CD4-positive, alpha-beta memory T cell (primary cell): ENCODE measurements at regions of chr18 and their contacts with region 1.

Region 1: DNA sequence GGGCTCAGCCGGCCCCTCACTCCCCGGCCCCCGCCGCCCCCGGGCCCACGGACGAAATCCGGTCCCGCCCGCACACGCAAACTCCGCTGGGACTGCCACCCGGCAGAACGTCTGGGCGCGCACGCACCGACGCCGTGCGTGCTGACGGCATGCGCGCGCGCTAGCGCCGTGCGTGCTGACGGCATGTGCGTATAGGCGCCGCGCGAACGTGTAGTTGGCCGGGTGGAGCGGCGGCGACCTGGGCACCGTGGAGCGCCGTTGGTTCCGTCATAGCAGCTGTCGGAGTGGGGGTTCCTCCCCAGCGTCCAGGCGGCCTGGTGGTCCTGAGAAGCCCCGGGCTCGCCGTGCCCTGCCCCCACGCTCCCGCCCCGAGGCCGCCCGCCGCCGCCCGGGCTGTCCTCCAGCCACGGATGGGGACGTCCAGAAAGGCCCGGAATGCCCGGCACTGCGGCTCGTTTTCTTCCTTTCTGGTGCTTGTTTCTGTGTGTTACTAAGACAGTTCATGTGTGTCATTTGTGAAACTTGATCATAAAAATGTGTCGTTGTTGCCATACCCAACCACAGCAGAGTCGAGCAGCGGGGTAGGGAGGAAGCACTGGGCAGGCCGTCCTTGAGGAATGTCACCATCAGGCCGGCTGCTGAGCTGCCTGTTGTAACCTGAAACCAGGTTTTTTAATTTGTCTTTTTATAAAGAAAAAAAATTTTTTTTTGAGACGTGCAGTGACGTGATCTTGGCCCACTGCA is at the start of gene TXNL4A:
- DNase-seq: peak; percentile 81 to 87 (median 84)
- H3K4me3 ChIP-seq: peak within 1 kb of the TSS; percentile 78 to 89
- H3K4me3 Mint-ChIP-seq: peak within 1 kb of the TSS; percentile 92 to 96 (median 94)
- H3K27ac ChIP-seq: peak within 1 kb of the TSS; percentile 95
- H3K27ac Mint-ChIP-seq: peak within 1 kb of the TSS; percentile 80 to 100 (median 98)
- H3K4me1 ChIP-seq: peaks cover 38% of the 10 kb centered on the region
- H3K4me1 Mint-ChIP-seq: peaks cover 28 to 49% (median 38%) of the 10 kb centered on the region in 4 donors
- H3K27me3 ChIP-seq: no peaks in the 10 kb centered on the region
- H3K27me3 Mint-ChIP-seq: no peaks in the 10 kb centered on the region
- total RNA-seq, gene TXNL4A: 72.6 to 76.1 TPM

Region 2: DNA sequence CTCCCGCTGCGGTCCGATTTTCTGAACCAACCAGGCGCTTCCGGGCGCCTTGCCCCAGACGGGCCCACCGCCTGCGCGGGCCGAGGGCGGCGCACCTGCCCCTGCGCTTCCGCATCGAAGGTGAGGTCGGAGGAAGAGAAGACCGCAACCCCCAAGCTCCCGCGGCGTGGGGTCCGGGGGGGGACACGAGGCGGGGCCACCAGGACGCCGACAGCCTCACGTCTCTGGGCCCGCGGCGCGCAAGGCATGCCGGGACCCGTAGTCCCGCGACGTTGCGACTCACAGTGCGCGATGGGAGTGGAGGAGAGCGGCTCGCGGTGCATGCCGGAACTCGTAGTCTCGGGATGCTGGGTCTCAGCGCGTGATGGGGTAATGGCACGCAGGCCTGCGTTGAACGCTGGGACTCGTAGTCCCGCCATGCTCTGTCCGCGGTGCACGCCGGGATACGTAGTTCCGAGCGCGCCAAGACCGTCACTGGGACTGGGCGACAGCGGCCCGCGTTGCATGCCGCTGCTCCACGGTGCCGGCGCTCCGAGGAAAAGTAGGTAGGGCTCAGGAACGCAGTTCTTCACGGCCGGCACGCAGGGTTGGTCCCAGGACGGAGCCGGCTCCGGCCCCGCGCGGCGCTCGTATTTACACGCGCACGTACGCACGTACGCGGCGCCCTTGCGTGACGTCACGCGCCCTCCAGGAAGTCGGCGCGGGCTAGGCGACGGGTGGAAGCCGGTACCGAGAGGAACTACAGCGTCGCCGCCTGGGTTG is 309.3 kb before region 1 on chr18 and contains the start of gene CTDP1:
- CTCF ChIA-PET with region 1: no interaction called
- POLR2A ChIA-PET with region 1: interaction called, 3 read pairs
- intact Hi-C with region 1: loop called (anchors 1 kb)
- DNase-seq: peak; percentile 98 to 99 (median 99)
- H3K4me3 ChIP-seq: peak within 1 kb of the TSS; percentile 75 to 88
- H3K4me3 Mint-ChIP-seq: peak within 1 kb of the TSS; percentile 95 to 100 (median 98)
- H3K27ac ChIP-seq: peak within 1 kb of the TSS; percentile 98
- H3K27ac Mint-ChIP-seq: peak within 1 kb of the TSS; percentile 99 to 100 (median 99)
- H3K4me1 ChIP-seq: peaks cover 53% of the 10 kb centered on the region
- H3K4me1 Mint-ChIP-seq: peaks cover 40 to 64% (median 54%) of the 10 kb centered on the region in 4 donors
- H3K27me3 ChIP-seq: no peaks in the 10 kb centered on the region
- H3K27me3 Mint-ChIP-seq: no peaks in the 10 kb centered on the region
- total RNA-seq, gene CTDP1: 42.6 to 44.5 TPM

Region 3: GRCh38 chr18:79951578-79952455 is 36.8 kb before region 1 on chr18 and contains the start of gene SLC66A2:
- CTCF ChIA-PET with region 1: no interaction called
- POLR2A ChIA-PET with region 1: interaction called, 17 read pairs
- intact Hi-C with region 1: loop called (anchors 1 kb)
- DNase-seq: peak; percentile 88 to 91 (median 88)
- H3K4me3 ChIP-seq: peak within 1 kb of the TSS; percentile 36 to 69
- H3K4me3 Mint-ChIP-seq: peak within 1 kb of the TSS; percentile 86 to 94 (median 88)
- H3K27ac ChIP-seq: peak within 1 kb of the TSS; percentile 64
- H3K27ac Mint-ChIP-seq: peak within 1 kb of the TSS; percentile 71 to 92 (median 87)
- H3K4me1 ChIP-seq: peaks cover 29% of the 10 kb centered on the region
- H3K4me1 Mint-ChIP-seq: peaks cover 8 to 38% (median 21%) of the 10 kb centered on the region in 4 donors
- H3K27me3 ChIP-seq: no peaks in the 10 kb centered on the region
- H3K27me3 Mint-ChIP-seq: no peaks in the 10 kb centered on the region
- total RNA-seq, gene SLC66A2: 26.0 to 26.4 TPM

Region 4: DNA sequence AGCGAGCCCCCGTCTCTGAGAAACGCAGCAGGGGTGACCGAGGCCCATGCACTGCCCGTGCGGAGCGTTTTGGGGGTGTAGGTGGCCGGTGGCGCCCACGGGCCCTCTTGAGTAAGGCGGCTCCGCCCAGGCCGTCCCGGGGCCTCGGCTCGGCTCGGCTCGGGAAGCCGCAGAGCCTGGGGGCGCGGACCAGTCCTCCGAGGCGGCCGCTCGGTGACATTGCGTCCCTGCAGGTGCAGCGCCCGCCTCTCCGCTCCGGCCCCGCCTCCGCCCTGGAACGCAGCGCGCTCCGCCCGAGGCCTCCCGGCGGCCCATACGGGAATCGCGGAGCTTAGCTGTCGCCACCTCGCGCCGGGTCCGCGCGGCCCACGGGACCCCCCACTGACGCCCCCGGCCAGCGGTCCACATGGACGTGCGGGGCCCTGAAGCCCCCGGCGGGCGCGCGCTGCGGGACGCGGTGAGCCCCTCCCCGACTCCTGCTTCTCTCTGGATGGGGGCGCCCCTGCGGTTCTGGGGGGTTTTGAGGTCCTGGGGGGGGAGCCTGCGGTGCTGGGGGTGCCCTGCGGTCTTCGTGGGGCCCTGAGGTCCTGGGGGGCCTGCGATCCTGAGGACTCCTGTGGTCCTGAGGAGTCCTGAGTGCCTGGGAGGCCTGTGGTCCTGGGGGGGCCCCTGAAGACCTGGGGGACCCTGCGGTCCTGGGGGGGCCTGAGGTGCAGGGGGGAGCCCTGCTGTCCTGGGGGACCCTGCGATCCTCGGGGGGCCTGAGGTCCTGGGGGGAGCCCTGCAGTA is 24.1 kb before region 1 on chr18 and contains the start of gene HSBP1L1:
- CTCF ChIA-PET with region 1: interaction called, 10 read pairs
- POLR2A ChIA-PET with region 1: interaction called, 8 read pairs
- intact Hi-C with region 1: loop called (anchors 1 kb)
- DNase-seq: peak; percentile 61 to 73 (median 66)
- H3K4me3 ChIP-seq: peak within 1 kb of the TSS; percentile 52 to 62
- H3K4me3 Mint-ChIP-seq: peak within 1 kb of the TSS; percentile 82 to 92 (median 86)
- H3K27ac ChIP-seq: peak within 1 kb of the TSS; percentile 54
- H3K27ac Mint-ChIP-seq: peak within 1 kb of the TSS; percentile 85 to 94 (median 90)
- H3K4me1 ChIP-seq: peaks cover 38% of the 10 kb centered on the region
- H3K4me1 Mint-ChIP-seq: peaks cover 17 to 44% (median 29%) of the 10 kb centered on the region in 4 donors
- H3K27me3 ChIP-seq: no peaks in the 10 kb centered on the region
- H3K27me3 Mint-ChIP-seq: peaks cover 0 to 3% of the 10 kb centered on the region in 2 donors
- total RNA-seq, gene HSBP1L1: 30.7 to 34.8 TPM

Region 5: GRCh38 chr18:80050797-80051196 is 62.2 kb after region 1 on chr18:
- CTCF ChIA-PET with region 1: no interaction called
- POLR2A ChIA-PET with region 1: no interaction called
- intact Hi-C with region 1: no loop called
- DNase-seq: no peak
- H3K4me3 ChIP-seq: no peak overlapping the region
- H3K4me3 Mint-ChIP-seq: no peak overlapping the region
- H3K27ac ChIP-seq: no peak overlapping the region
- H3K27ac Mint-ChIP-seq: no peak overlapping the region
- H3K4me1 ChIP-seq: no peaks in the 10 kb centered on the region
- H3K4me1 Mint-ChIP-seq: no peaks in the 10 kb centered on the region
- H3K27me3 ChIP-seq: no peaks in the 10 kb centered on the region
- H3K27me3 Mint-ChIP-seq: no peaks in the 10 kb centered on the region

Region 6: GRCh38 chr18:80108728-80109675 is 120.4 kb after region 1 on chr18 and contains the start of gene ADNP2:
- CTCF ChIA-PET with region 1: interaction called, 3 read pairs
- POLR2A ChIA-PET with region 1: interaction called, 6 read pairs
- intact Hi-C with region 1: loop called (anchors 2 kb)
- DNase-seq: peak; percentile 90 to 95 (median 92)
- H3K4me3 ChIP-seq: peak within 1 kb of the TSS; percentile 55 to 67
- H3K4me3 Mint-ChIP-seq: peak within 1 kb of the TSS; percentile 83 to 88 (median 86)
- H3K27ac ChIP-seq: peak within 1 kb of the TSS; percentile 80
- H3K27ac Mint-ChIP-seq: peak within 1 kb of the TSS; percentile 96 to 97 (median 96)
- H3K4me1 ChIP-seq: peaks cover 32% of the 10 kb centered on the region
- H3K4me1 Mint-ChIP-seq: peaks cover 35 to 60% (median 45%) of the 10 kb centered on the region in 4 donors
- H3K27me3 ChIP-seq: no peaks in the 10 kb centered on the region
- H3K27me3 Mint-ChIP-seq: no peaks in the 10 kb centered on the region
- total RNA-seq, gene ADNP2: 20.2 to 20.9 TPM

Region 7: GRCh38 chr18:80147418-80148325 is 159.0 kb after region 1 on chr18:
- CTCF ChIA-PET with region 1: no interaction called
- POLR2A ChIA-PET with region 1: no interaction called
- intact Hi-C with region 1: loop called (anchors 5 kb)
- DNase-seq: peak; percentile 60 to 83 (median 62)
- H3K4me3 ChIP-seq: peak overlapping the region; percentile 9 to 54
- H3K4me3 Mint-ChIP-seq: peak overlapping the region; percentile 84 to 94 (median 86)
- H3K27ac ChIP-seq: no peak overlapping the region
- H3K27ac Mint-ChIP-seq: peak overlapping the region in 6 of 7 donors; percentile 19 to 72 (median 48)
- H3K4me1 ChIP-seq: peaks cover 15% of the 10 kb centered on the region
- H3K4me1 Mint-ChIP-seq: peaks cover 5 to 34% (median 14%) of the 10 kb centered on the region in 4 donors
- H3K27me3 ChIP-seq: peaks cover 4% of the 10 kb centered on the region
- H3K27me3 Mint-ChIP-seq: peaks cover 6 to 11% of the 10 kb centered on the region in 2 donors